A549 (cell line): ENCODE measurements at regions of chr9 and their contacts with region 1.

Region 1: DNA sequence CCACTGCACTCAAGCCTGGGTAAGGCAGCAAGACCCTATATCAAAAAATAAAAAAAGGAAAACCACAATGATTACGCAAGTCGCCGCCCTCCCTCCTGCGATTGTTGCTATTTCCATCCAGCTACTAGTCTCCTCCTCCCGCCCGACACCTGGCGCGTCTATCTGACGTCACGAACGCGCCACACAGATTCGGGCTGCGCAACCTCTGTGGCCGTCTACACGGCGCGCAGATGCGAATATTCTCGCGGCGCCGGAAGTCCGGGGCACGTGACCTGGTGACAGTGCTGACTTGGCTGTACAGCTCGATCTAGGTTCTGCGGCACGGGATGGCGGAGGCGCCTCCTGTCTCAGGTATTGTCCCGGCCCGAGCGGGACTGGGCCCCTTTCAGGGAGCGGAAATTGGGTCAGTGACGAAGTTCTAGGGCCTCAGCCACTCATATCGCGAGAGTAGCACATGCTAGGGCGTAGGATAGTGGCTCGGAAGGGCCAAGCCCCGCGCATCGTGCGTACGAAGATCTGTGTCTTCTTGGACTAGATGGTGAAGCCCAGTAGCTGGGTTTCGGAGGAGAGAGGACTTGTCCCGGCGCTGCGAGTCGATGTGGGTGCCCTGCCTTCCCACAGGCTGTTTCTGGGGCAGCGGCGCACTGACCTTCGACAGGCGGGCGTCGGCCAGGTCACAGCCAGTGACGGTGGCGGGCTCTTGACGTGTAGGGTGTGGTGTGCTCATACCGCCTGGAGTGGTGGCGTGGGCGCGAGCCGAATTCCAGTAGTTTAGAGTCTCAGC is at the start of gene NFX1:
- DNase-seq: peak; percentile 95 to 99
- ATAC-seq: peak; percentile 86 to 94
- H3K4me3 ChIP-seq: peak within 1 kb of the TSS; percentile 66
- H3K27ac ChIP-seq: peak within 1 kb of the TSS; percentile 91 to 99
- H3K4me1 ChIP-seq: peaks cover 48% of the 10 kb centered on the region
- CTCF ChIP-seq: no peak
- EP300 ChIP-seq: no peak
- POLR2A ChIP-seq: peak; percentile 71
- RAD21 ChIP-seq: no peak
- polyA plus RNA-seq, gene NFX1: 41.1 and 41.2 TPM in 2 replicates

Region 2: DNA sequence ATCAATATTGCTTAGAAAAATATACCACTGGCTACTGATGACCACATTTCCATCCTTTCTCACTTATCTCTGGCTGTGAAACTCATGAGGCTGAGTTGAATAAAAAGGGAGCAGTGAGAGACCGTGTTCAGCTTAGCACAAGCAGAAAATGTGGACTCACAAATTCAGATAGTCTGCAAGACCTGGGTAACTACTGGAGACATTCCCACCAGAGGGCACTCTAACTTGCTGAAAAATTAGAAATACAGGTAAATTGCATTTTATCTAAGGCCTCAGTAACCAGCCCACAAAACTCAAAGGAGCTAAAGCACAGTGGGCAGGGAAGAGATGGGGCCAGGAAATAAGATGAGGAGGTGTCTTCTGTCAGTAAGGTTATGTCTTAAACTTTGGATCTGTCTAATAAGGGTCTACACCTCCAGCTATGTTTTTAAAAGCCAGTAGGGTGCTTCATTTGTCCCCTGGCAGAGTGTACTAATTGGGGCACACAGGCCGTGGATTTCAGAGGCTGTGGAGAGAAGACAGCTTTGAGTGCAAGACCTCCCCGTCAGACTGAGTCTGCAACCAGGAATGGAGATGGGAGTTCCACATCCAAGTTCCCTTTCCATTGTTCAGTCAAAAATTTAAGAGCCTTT is 708.8 kb before region 1 on chr9:
- CTCF ChIA-PET with region 1: no interaction called
- POLR2A ChIA-PET with region 1: no interaction called
- DNase-seq: peak; percentile 36 to 78
- ATAC-seq: peak; percentile 88 to 91
- H3K4me3 ChIP-seq: no peak overlapping the region
- H3K27ac ChIP-seq: no peak overlapping the region
- H3K4me1 ChIP-seq: peaks cover 8% of the 10 kb centered on the region; the same call in 2 of the 3 replicates
- CTCF ChIP-seq: peak; percentile 81
- EP300 ChIP-seq: no peak
- POLR2A ChIP-seq: no peak
- RAD21 ChIP-seq: peak; percentile 67 to 74

Region 3: DNA sequence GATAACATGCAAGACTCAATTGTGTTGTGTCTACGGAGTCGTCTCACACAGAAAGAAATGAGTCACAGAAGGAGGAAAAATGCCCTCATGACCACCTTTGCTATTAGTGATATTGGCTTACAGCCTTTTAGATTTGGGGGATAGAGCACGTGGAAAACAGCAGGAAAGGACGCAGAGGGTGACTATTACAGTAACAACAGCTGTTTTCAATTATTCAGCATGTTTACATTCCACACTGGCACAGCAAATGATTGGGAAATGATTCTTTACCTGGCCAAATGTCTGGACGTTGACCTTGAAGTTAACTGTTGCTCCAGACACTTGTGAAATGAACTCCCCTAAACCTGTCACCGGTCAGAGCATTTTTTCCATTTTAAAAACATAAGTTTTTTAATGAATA is 335.8 kb before region 1 on chr9:
- CTCF ChIA-PET with region 1: no interaction called
- POLR2A ChIA-PET with region 1: no interaction called
- DNase-seq: peak in 1 of 2 experiments; percentile 4
- ATAC-seq: no peak
- H3K4me3 ChIP-seq: no peak overlapping the region
- H3K27ac ChIP-seq: no peak overlapping the region
- H3K4me1 ChIP-seq: no peaks in the 10 kb centered on the region
- CTCF ChIP-seq: no peak
- EP300 ChIP-seq: no peak
- POLR2A ChIP-seq: no peak
- RAD21 ChIP-seq: no peak

Region 4: DNA sequence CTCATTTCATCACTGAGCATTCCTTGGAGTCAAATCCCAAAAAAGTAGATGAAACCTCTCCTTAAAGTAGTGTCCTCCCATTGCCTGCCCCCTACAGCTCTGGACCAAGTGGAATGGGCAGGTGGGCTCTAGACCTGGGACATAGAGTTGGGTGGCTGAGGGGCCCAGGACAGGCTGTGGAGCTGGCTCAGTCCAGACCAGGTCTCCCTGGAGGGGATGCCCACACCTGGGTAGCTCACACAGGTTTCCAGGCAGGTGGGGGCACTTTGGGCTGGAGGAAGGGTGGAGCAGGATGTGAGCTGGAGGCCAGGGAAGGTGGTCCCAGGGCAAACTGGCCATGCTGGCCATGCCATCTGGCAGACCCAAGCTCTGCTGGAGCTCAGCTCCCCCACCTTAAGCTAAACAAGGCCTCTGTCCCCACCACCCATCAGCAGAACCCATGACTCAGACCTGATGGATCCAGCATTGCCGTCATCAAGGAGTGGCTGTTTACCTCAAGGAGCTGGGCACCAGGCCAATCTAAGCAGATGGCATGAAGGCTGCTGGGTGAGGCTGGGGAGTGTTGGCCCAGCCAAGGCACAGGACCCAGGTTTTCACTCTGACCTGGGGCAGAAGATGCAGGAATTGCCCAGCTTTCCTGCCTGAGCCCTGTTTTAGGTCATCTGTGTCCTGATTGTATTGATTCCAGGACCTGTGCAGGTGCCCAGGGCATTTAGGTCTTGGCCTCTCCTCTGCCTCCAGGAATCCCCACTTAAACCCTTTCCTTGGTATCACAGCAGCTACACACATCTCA is 56.6 kb before region 1 on chr9:
- CTCF ChIA-PET with region 1: interaction called, 27 read pairs
- POLR2A ChIA-PET with region 1: interaction called, 13 read pairs
- DNase-seq: peak; percentile 97 to 100
- ATAC-seq: peak; percentile 86
- H3K4me3 ChIP-seq: no peak overlapping the region
- H3K27ac ChIP-seq: peak overlapping the region; percentile 96 to 99
- H3K4me1 ChIP-seq: peaks cover 61% of the 10 kb centered on the region
- CTCF ChIP-seq: no peak
- EP300 ChIP-seq: peak; percentile 92 to 95; a peak in 4 of 5 replicates
- POLR2A ChIP-seq: peak; percentile 37; the same call in 1 of the 2 replicates
- RAD21 ChIP-seq: peak; percentile 32 to 53; a peak in 4 of 5 replicates

Region 5: GRCh38 chr9:33272061-33272460 is 18.4 kb before region 1 on chr9:
- CTCF ChIA-PET with region 1: interaction called, 16 read pairs
- POLR2A ChIA-PET with region 1: no interaction called
- DNase-seq: no peak
- ATAC-seq: no peak
- H3K4me3 ChIP-seq: no peak overlapping the region
- H3K27ac ChIP-seq: no peak overlapping the region
- H3K4me1 ChIP-seq: no peaks in the 10 kb centered on the region
- CTCF ChIP-seq: no peak
- EP300 ChIP-seq: no peak
- POLR2A ChIP-seq: no peak
- RAD21 ChIP-seq: no peak

Region 6: DNA sequence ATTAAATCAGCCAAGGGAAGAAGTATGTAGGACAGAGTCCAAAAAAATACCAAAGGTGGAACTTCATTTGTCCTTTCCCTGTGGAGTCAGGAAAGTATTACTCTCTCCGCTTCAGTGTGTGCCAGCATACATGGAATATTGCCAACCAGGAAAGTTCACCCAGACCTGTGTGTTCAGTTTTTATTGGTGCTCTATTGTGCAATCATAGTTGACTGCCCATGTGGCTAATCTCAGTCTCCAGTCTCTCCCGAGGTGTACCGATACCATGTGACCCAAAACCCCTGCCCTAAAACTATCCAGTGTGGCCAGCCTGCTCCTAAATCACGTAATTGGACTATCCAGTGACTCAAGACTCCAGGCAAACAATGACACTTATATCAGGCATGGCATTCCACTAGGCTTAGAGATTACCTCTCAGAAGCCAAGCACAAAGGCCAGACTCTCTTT is 38.7 kb after region 1 on chr9:
- CTCF ChIA-PET with region 1: interaction called, 10 read pairs
- POLR2A ChIA-PET with region 1: interaction called, 6 read pairs
- DNase-seq: peak; percentile 81 to 97
- ATAC-seq: peak; percentile 97 to 99
- H3K4me3 ChIP-seq: no peak overlapping the region
- H3K27ac ChIP-seq: peak overlapping the region; percentile 85 to 90
- H3K4me1 ChIP-seq: peaks cover 42% of the 10 kb centered on the region
- CTCF ChIP-seq: no peak
- EP300 ChIP-seq: peak; percentile 78 to 87; a peak in 3 of 5 replicates
- POLR2A ChIP-seq: no peak
- RAD21 ChIP-seq: peak in 1 of 2 experiments; percentile 23; a peak in 1 of 5 replicates

Region 7: DNA sequence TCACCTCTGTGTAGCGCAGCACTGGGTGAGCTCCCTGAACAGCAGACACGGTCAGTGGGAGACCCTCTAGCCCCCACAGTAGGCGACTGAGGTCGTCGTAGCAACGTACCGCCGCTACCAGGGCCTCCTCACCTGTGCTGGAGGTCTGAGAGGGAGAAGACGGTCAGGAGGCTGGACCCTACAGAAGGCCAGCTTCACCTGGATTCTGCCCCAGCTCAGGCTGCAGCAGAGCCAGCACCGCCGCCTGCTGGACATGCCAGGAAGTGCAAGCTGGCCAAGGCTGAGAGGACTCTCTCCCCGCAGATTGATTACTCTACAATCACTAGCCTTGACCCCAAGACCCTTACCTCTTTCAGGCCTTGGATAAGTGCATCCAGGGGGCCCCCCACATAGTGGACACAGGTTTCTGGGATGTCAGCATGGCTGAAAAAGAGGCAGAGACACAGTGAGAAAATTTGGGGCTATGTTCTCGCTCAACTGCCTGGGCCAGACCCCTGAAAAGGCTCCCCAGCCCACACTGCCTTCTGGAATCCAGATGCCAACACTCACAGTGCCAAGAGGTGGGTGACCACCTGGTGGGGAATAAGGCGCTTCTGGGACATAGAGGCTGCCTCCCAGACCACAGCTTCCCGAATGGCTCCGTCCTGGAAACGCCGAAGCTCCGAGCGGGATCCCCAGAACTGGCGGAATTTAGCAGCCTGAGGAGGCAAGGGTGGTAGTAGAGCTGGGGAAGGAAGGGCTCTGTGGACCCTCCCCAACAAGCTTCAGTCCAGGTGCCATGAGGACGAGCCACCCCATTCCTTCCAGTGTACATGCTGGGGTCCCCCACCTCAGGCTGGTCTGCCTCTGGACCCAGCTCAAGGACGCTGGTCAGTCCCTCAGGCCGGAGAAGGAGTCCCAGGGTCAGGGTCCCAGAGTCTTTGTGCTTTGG is 176.4 kb after region 1 on chr9:
- CTCF ChIA-PET with region 1: interaction called, 63 read pairs
- POLR2A ChIA-PET with region 1: no interaction called
- DNase-seq: peak; percentile 55 to 75
- ATAC-seq: peak; percentile 74 to 90
- H3K4me3 ChIP-seq: no peak overlapping the region
- H3K27ac ChIP-seq: peak overlapping the region in 1 of 2 experiments; percentile 57; a peak in 2 of 6 replicates
- H3K4me1 ChIP-seq: peaks cover 4% of the 10 kb centered on the region
- CTCF ChIP-seq: peak; percentile 88
- EP300 ChIP-seq: no peak
- POLR2A ChIP-seq: no peak
- RAD21 ChIP-seq: peak; percentile 90 to 92